Activated CD4-positive, alpha-beta memory T cell treated with anti-CD3 and anti-CD28 coated beads for 36 hours (primary cell): ENCODE measurements at regions of chr15 and their contacts with region 1.

Region 1: GRCh38 chr15:68277603-68278344 is at the start of gene FEM1B:
- DNase-seq: peak; percentile 92
- H3K4me3 Mint-ChIP-seq: peak within 1 kb of the TSS; percentile 90
- H3K27ac Mint-ChIP-seq: peak within 1 kb of the TSS; percentile 97
- H3K4me1 Mint-ChIP-seq: peaks cover 52% of the 10 kb centered on the region
- H3K27me3 Mint-ChIP-seq: no peaks in the 10 kb centered on the region
- total RNA-seq, gene FEM1B: 32.6 to 34.2 TPM

Region 2: DNA sequence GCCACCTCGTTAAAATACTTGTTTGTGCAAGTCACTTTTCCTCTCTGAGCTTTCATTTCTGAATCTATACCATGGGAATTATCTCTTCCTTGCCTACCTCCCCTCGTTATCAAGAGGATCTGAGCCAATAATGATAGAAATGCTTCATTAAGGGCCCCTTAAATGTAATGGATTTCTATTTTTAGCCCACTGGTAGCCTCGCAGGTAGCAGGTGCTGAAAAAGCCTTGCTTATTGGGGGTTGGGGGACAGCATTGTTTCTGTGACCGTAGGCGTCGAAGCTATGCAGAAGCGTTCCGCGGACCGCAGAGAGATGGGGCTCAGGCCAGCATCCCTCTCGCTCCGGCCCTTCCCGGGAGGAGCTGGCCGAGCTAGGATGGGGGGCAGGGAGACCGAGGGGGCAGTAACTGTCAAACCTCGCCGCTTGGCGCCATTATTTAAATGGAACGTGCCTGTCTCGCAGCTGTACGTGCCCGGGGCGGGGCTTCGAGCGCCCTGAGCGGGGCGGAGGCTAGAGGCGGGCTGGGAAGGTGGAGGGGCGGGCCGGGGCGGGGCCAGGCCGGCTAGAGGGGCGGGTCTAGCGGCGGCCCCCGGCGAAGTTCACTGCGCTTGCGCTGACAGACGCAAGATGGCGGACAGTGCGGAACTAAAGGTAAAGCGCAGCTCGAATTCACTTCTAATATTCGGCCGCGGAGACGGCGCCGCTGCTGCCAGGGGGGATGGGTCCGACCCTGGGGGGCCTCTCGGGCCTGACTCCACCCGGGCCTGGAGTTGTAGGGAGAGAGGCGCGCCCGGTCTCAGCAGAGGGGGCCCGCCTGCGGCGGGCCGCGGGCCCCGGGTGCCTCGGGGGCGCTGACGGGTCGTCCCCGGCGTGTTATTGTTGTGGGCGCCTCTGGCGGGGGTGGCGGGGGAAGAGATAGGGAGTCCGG is 223.8 kb before region 1 on chr15 and contains the start of gene PIAS1:
- CTCF ChIA-PET with region 1: no interaction called
- POLR2A ChIA-PET with region 1: interaction called, 10 read pairs
- intact Hi-C with region 1: loop called (anchors 1 kb)
- DNase-seq: peak; percentile 96
- H3K4me3 Mint-ChIP-seq: peak within 1 kb of the TSS; percentile 98
- H3K27ac Mint-ChIP-seq: peak within 1 kb of the TSS; percentile 92
- H3K4me1 Mint-ChIP-seq: peaks cover 49% of the 10 kb centered on the region
- H3K27me3 Mint-ChIP-seq: peaks cover 7% of the 10 kb centered on the region
- total RNA-seq, gene PIAS1: 29.4 to 30.9 TPM

Region 3: GRCh38 chr15:68229386-68230156 is 48.2 kb before region 1 on chr15 and contains the start of gene CLN6:
- CTCF ChIA-PET with region 1: interaction called, 8 read pairs
- POLR2A ChIA-PET with region 1: interaction called, 36 read pairs
- intact Hi-C with region 1: loop called (anchors 1 kb)
- DNase-seq: peak; percentile 83
- H3K4me3 Mint-ChIP-seq: peak within 1 kb of the TSS; percentile 84
- H3K27ac Mint-ChIP-seq: peak within 1 kb of the TSS; percentile 72
- H3K4me1 Mint-ChIP-seq: peaks cover 34% of the 10 kb centered on the region
- H3K27me3 Mint-ChIP-seq: no peaks in the 10 kb centered on the region
- total RNA-seq, gene CLN6: 32.9 to 34.2 TPM

Region 4: DNA sequence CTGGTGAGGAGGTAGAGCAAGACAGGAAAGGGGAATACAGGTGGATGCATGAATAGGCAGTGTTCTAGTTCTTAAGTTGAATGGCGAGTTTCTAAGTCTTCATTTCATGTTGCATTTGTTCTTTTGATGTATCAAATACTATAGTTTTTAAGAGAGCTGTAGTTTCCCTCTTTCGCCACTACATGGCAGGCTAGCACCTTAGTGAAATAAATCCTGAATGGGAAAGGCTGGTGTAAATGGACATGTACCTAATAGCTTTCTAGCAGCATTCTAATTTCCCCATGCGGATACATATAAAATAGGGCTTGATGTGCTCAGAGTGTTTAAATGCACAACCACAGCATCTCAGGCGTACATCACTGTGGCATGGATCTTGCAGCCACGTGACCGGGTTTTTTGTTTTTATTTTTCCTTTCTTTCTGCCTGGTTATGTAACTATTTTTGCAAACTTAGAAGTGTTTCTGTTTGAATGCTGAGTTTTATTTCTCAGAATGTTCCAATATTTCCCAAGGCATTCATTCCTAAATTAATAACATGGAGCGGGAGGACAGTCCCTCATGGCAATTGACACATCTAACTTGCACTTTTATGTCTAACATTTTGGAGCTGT is 24.7 kb before region 1 on chr15:
- CTCF ChIA-PET with region 1: interaction called, 16 read pairs
- POLR2A ChIA-PET with region 1: interaction called, 14 read pairs
- intact Hi-C with region 1: loop called (anchors 1 kb)
- DNase-seq: peak; percentile 36
- H3K4me3 Mint-ChIP-seq: no peak overlapping the region
- H3K27ac Mint-ChIP-seq: no peak overlapping the region
- H3K4me1 Mint-ChIP-seq: peaks cover 4% of the 10 kb centered on the region
- H3K27me3 Mint-ChIP-seq: peaks cover 3% of the 10 kb centered on the region

Region 5: GRCh38 chr15:68298882-68299381 is 21.2 kb after region 1 on chr15:
- CTCF ChIA-PET with region 1: interaction called, 5 read pairs
- POLR2A ChIA-PET with region 1: interaction called, 6 read pairs
- intact Hi-C with region 1: loop called (anchors 2 kb)
- DNase-seq: no peak
- H3K4me3 Mint-ChIP-seq: peak overlapping the region; percentile 59
- H3K27ac Mint-ChIP-seq: peak overlapping the region; percentile 64
- H3K4me1 Mint-ChIP-seq: peaks cover 28% of the 10 kb centered on the region
- H3K27me3 Mint-ChIP-seq: no peaks in the 10 kb centered on the region

Region 6: DNA sequence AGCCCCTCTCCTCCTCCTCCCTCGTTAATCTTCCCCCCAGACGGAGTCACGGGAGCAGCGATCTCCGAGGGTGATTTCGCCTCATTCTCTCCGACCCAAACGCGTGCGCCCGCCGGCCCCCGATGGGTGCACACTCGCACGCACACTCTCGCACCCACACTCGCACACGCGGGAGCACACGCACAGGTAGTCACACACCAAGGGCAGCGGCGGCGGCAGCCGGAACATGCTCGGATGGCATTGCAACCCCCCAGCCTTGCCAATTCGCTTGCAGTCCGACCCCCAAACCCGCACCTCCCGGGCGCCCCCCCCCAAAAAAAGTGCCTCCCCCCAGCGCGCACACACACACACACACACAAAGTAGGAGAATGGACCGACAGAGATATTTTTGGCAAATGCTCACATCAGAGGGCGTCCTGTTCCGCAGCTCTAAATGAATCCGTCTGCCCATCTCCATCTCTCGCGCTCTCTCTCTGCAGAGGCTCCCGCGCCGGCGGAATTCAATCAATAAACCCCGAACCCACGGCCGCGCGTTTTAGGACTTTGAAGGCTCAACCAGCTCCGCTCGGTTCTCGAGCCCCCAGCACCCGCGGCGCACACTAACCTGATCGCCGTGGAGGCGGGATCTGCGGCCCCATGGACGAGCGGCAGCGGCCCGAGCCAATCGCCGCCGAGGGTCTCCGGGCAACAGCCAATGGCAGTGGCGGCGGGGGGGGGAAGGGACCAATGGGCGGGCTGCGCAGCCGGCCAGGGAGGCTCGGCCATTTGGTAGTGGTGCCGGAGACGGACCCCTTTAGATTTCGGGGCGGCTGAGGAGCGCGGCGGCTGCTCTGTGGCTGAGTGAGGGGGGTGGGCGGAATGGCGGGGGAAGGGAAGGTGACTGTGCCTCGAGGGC is 542.8 kb after region 1 on chr15 and contains the start of gene ANP32A:
- CTCF ChIA-PET with region 1: no interaction called
- POLR2A ChIA-PET with region 1: no interaction called
- intact Hi-C with region 1: loop called (anchors 5 kb)
- DNase-seq: peak; percentile 96
- H3K4me3 Mint-ChIP-seq: peak within 1 kb of the TSS; percentile 99
- H3K27ac Mint-ChIP-seq: peak within 1 kb of the TSS; percentile 99
- H3K4me1 Mint-ChIP-seq: peaks cover 31% of the 10 kb centered on the region
- H3K27me3 Mint-ChIP-seq: no peaks in the 10 kb centered on the region
- total RNA-seq, gene ANP32A: 190 to 204 TPM